Colonic mucosa (tissue), 4 donors: ENCODE measurements at regions of chr3 and their contacts with region 1.

Region 1: DNA sequence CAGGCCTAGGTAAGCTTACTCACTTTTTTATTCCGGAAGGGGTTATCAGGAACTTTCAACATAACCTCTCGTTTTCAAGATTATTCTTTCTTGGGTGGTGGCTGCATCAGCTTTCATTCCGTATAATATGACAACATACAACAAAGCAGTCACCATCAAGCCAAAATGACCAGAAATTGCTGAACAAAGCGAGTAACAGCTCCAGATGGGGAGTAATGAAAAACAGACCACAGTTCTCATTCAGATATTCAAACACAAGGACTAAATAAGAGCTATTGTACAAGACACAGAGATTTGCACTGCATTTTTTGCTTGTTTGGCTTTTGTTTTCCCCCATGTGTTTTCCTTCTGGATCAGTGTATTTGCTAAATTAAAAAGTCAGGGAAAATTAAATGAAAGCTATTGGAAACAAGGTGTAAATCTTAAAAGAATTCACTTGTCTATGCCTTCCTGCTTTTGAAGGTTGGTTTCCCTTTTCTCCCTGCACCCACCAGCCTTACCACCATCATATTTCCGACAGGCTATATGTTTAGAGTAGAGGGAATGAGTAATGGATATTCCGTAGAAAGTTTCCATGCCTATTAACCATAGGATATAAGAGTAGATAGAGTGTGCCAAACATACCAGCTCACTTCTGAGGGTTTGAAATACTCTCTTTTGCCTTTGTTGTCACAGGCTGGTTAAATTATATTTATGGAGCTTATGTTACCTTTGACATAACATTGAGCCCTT is 213.6 kb downstream of the RBMS3 start:
- DNase-seq: no peak
- H3K4me3 ChIP-seq: no peak overlapping the region
- H3K27ac ChIP-seq: no peak overlapping the region
- H3K4me1 ChIP-seq: no peaks in the 10 kb centered on the region
- H3K27me3 ChIP-seq: no peaks in the 10 kb centered on the region
- CTCF ChIP-seq: no peak

Region 2: DNA sequence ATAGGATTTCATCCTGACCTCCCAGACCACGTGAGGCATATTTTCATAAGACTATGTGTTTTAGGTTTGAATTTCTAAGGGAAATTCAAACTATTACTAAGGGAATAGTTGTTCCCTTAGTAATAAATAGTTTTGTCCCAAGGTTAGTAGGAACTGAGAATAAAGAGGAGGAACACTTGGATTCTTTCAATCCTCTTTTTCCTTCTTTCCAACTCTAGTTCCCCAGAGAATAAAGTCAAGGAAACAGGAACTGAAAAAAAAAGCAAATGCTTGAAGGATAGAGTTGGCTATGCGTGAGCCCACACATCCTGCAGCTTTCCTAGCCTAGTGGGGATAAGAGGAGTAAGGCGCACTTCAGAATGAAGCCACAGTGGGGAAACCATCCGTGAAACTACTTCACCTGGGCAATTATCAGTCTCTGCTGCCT is 799.8 kb after region 1 on chr3:
- intact Hi-C with region 1: no loop called
- DNase-seq: no peak
- H3K4me3 ChIP-seq: no peak overlapping the region
- H3K27ac ChIP-seq: no peak overlapping the region
- H3K4me1 ChIP-seq: peaks cover 3% of the 10 kb centered on the region
- H3K27me3 ChIP-seq: no peaks in the 10 kb centered on the region
- CTCF ChIP-seq: no peak

Region 3: DNA sequence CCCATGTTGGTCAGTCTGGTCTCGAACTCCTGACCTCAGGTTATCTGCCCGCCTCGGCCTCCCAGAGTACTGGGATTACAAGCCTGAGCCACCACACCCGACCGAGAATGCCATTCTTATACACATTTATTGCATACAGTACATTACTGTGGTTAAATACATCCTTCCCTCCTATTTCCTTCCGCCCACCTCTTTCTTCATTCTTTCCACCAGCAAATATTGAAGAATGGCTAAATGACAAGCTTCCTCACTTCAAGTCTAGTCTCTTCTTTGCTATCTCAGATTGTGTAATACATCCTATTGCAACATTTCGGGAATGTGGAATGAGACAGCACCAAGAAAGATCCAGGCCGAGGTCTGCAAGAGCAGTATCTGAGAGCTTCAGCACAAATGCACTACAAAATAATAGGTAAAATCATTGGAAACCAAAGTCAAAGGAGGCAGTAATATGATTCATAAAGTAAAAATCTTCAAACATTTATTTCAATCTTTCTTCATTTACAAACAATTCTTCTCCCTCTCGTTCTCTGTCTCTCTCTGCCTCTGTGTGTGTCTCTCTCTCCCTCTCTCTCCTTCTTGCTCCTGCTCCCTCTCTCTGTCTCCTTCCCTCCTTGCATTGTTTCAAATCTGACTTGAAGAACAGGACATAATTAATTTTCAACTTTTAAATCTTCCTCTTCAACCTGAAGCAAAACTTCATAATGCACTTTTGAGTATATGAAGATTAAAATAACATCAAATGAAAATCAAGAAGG is 1017.2 kb after region 1 on chr3:
- intact Hi-C with region 1: loop called (anchors 10 kb)
- DNase-seq: no peak
- H3K4me3 ChIP-seq: no peak overlapping the region
- H3K27ac ChIP-seq: no peak overlapping the region
- H3K4me1 ChIP-seq: no peaks in the 10 kb centered on the region
- H3K27me3 ChIP-seq: no peaks in the 10 kb centered on the region
- CTCF ChIP-seq: no peak